Stomach (tissue), 19 donors: ENCODE measurements at regions of chr5 and their contacts with region 1.

Region 1: GRCh38 chr5:174735498-174736330 is 11.3 kb downstream of the MSX2 start:
- DNase-seq: peak in 1 of 2 donors; percentile 48
- H3K4me3 ChIP-seq: peak overlapping the region in 1 of 4 donors; percentile 30
- H3K27ac ChIP-seq: no peak overlapping the region
- H3K4me1 ChIP-seq: peaks cover 0 to 27% (median 18%) of the 10 kb centered on the region in 4 donors
- H3K27me3 ChIP-seq: peaks cover 29 to 97% (median 69%) of the 10 kb centered on the region in 3 donors
- CTCF ChIP-seq: peak in 3 of 7 experiments; percentile 37 to 58 (median 39)
- EP300 ChIP-seq: no peak
- POLR2A ChIP-seq: no peak

Region 2: GRCh38 chr5:174397206-174397605 is 338.5 kb before region 1 on chr5:
- intact Hi-C with region 1: no loop called
- DNase-seq: no peak
- H3K4me3 ChIP-seq: no peak overlapping the region
- H3K27ac ChIP-seq: no peak overlapping the region
- H3K4me1 ChIP-seq: no peaks in the 10 kb centered on the region
- H3K27me3 ChIP-seq: peaks cover 0 to 37% (median 0%) of the 10 kb centered on the region in 3 donors
- CTCF ChIP-seq: no peak
- EP300 ChIP-seq: no peak
- POLR2A ChIP-seq: no peak

Region 3: GRCh38 chr5:174424219-174425053 is 311.3 kb before region 1 on chr5:
- intact Hi-C with region 1: loop called (anchors 5 kb)
- DNase-seq: no peak
- H3K4me3 ChIP-seq: no peak overlapping the region
- H3K27ac ChIP-seq: no peak overlapping the region
- H3K4me1 ChIP-seq: peaks cover 0 to 4% (median 4%) of the 10 kb centered on the region in 4 donors
- H3K27me3 ChIP-seq: peaks cover 0 to 44% (median 0%) of the 10 kb centered on the region in 3 donors
- CTCF ChIP-seq: no peak
- EP300 ChIP-seq: no peak
- POLR2A ChIP-seq: no peak

Region 4: DNA sequence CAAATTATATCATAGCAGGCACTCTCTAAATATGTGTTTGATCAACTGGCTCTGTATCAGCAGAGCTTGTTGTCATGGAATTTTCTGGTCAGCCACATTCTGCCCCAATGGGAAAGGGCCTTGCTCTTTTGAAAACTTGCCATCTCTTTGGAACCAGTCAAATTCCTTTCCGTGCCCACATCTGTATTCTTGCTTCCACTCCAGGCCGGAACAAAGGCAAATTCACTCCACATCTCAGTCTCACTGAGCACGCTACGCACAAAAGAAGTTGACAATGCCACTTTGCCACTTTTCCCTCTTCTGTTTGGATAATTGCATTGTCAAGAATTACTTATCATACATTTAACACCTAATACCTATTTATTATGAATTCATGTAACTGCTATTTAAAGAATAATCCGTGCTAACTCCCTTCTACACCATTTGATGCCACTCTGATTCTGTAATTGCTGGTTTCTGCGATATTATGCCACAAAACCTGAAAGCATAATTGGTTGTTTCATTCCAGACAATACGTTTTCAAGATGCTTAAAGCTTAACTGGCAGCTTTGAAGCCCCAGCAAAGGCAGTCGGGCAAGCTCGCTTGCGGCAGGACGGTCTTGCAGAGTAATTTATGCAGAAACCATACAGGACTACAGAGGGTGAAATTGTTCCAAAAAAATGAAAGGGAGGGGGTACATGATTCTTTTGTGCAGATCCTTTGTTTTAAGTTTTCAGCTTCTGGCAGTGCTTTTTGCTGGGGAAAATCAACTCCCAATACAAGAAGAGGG is 266.3 kb after region 1 on chr5:
- intact Hi-C with region 1: no loop called
- DNase-seq: no peak
- H3K4me3 ChIP-seq: no peak overlapping the region
- H3K27ac ChIP-seq: no peak overlapping the region
- H3K4me1 ChIP-seq: no peaks in the 10 kb centered on the region
- H3K27me3 ChIP-seq: no peaks in the 10 kb centered on the region
- CTCF ChIP-seq: no peak
- EP300 ChIP-seq: no peak
- POLR2A ChIP-seq: no peak